ENCODE measurements at regions of chr11 and their contacts with region 1.

Region 1: DNA sequence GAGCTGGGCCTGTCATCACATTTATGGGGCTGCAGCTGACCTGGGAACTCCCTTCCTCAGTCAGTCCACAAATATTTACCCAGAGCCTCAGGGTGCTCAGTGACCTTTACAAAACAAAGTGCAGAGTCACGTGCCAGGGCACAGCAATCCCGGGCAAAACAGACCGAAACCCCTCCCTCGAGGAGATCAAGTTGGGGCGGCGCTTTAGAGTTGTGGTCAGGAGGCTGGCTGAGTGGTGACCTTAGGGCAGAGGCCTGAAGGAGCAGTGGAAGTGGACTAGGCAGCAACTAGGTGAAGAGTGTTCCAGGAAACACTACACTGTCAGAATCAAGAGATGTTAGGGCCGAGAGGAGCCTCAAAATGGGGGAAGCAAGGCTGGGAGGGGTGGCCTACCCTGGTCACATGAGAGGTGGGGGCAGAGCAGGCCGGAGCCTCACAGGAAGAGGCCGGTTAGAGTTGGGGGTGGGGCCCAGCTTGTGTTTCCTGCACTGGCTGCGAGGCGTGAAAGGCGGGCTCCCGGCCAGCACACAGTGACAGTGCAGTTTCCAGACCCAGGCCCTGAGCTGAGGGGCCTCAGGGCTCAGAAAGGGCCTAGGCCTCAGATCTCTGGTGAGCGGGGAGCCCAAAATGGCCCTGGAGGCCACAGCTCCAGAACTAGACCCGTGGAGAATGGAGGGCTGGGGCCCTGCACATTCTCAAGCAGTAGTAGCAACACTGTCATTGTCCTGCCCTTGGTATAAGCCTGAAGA is 3.7 kb upstream of the NEAT1 start:
- DNase-seq: peak; percentile 96
- H3K4me3 Mint-ChIP-seq: peak overlapping the region; percentile 72
- H3K27ac Mint-ChIP-seq: peak overlapping the region; percentile 99
- H3K4me1 Mint-ChIP-seq: peaks cover 68% of the 10 kb centered on the region
- H3K27me3 Mint-ChIP-seq: peaks cover 16% of the 10 kb centered on the region
- CTCF ChIP-seq: no peak

Region 2: GRCh38 chr11:65366340-65366773 is 52.5 kb before region 1 on chr11:
- CTCF ChIA-PET with region 1: interaction called, 6 read pairs
- intact Hi-C with region 1: loop called (anchors 1 kb)
- DNase-seq: peak; percentile 49
- H3K4me3 Mint-ChIP-seq: no peak overlapping the region
- H3K27ac Mint-ChIP-seq: no peak overlapping the region
- H3K4me1 Mint-ChIP-seq: peaks cover 11% of the 10 kb centered on the region
- H3K27me3 Mint-ChIP-seq: no peaks in the 10 kb centered on the region
- CTCF ChIP-seq: peak; percentile 72

Region 3: DNA sequence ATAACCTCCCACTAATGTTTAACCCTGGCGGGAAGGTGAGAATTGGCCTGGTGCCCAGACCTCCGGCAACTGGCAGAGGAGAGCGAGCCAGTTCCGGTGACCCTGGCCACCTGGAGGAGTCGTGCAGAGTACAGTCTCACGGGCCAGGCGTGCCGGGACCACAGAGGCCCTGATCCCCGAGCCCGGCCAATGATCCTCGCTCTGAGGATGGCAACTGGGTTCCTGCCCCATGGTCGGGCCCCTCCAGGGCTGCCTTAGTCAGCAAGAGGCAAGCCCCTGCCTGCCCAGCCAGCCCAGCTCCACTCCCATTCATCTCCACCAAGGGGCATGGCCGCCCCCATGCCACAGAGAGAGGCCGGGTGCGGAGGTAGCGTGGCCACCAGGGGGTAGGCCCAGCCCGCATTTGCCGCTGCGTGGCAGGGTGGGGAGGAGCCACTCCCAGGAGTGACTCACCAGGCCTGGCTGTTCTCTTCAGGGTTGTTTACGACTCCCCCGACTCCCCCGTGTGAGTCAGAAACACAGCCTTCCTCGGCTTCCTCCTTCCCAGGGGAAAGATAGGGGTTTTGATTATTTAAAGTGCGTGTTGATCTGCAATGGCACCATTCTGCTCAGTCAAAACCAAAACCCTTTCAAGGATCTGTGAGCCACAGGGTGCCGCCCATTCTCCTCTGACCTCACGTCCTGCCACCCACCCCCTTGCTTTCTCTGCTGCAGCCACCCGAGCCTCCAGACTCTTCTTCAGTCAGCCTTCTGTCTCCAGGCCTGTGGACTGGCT is 36.7 kb before region 1 on chr11 and contains the start of gene SLC25A45:
- CTCF ChIA-PET with region 1: interaction called, 8 read pairs
- intact Hi-C with region 1: loop called (anchors 5 kb)
- DNase-seq: peak; percentile 98
- H3K4me3 Mint-ChIP-seq: peak within 1 kb of the TSS; percentile 58
- H3K27ac Mint-ChIP-seq: peak within 1 kb of the TSS; percentile 81
- H3K4me1 Mint-ChIP-seq: peaks cover 68% of the 10 kb centered on the region
- H3K27me3 Mint-ChIP-seq: no peaks in the 10 kb centered on the region
- CTCF ChIP-seq: peak; percentile 78
- total RNA-seq, gene SLC25A45: 2.9 and 4.0 TPM in 2 replicates

Region 4: DNA sequence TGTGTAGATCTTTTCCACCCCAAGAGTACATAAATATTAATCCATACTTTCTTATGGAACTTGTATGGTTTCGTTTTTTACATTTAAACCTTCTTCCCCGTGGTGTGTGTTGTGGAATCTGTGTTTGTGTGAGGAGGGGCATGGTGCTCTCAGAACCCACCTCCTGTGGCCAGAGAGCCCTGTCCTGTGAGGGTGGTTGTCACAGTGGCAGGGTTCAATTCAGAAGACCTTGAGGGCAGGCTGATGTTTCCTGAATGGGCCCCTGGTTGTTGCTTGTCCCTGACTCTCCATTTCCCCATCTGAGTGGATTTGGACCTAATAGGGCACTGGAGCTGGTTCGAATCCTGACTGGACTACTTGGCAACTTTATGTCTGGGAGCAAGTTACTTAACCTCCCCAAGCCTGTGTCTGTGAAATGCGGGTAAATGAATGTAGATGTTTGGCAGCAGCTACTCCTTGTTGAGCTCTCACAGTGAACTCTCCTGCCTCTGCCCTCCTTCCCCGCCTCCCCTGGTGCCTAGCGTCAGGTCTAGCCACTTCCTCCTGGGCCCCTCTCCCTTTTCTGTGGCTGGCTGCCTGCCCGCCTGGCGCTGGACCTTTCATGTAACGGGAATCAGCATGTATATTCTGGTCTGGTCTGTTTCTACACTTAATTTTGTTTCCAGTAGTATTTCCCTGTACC is 11.0 kb after region 1 on chr11:
- CTCF ChIA-PET with region 1: interaction called, 10 read pairs
- intact Hi-C with region 1: no loop called
- DNase-seq: peak; percentile 73
- H3K4me3 Mint-ChIP-seq: peak overlapping the region; percentile 90
- H3K27ac Mint-ChIP-seq: peak overlapping the region; percentile 99
- H3K4me1 Mint-ChIP-seq: peaks cover 69% of the 10 kb centered on the region
- H3K27me3 Mint-ChIP-seq: no peaks in the 10 kb centered on the region
- CTCF ChIP-seq: no peak